GM18951 (cell line): ENCODE measurements at regions of chr4 and their contacts with region 1.

Region 1: GRCh38 chr4:76515975-76516843 is 81.2 kb downstream of the SHROOM3 start:
- POLR2A ChIP-seq: no peak

Region 2: DNA sequence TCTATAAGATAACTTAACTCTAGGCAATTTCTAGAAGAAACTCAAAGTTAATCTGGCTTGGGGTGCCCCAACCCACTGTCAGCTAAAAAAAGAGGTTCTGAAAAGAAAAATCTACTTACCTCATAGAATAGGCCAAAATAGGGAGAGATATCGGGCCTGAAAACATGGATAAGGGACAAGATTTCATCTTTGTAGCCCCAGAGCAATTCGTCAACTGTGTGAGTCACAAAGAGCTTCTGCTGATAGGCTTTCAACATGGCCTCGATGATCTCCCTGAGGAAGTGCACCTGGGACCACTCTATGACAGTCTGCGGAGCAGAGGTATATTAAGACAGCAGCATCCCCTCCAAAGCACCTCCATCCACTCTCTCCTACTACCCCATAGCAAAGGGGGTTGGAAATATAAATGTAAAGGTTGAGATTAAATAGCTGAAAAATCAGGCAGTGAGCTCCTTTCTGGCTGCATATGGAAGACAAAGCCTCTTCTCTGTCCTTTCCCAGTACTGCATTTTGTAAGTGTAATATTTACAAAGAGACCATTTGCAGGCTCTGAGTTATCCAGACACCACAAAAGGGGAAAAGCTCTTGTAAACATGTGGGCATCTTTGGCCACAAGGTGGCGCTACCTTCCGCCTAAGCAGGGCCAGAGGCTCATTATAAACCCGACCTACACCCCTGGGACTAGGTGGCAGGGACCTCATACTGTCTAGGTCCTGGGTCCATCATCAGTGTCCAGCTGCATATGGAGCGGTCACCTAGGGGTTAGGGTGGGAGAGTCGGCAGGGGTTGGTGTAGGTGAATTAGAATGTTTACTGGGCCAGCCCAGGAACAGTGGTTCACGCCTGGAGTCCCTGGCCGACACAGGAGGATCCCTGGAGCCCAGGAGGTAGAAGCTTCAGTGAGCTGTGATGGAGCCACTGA is 336.6 kb before region 1 on chr4:
- in situ Hi-C with region 1: no loop called
- POLR2A ChIP-seq: no peak

Region 3: GRCh38 chr4:76326515-76326914 is 189.7 kb before region 1 on chr4:
- in situ Hi-C with region 1: no loop called
- POLR2A ChIP-seq: no peak

Region 4: DNA sequence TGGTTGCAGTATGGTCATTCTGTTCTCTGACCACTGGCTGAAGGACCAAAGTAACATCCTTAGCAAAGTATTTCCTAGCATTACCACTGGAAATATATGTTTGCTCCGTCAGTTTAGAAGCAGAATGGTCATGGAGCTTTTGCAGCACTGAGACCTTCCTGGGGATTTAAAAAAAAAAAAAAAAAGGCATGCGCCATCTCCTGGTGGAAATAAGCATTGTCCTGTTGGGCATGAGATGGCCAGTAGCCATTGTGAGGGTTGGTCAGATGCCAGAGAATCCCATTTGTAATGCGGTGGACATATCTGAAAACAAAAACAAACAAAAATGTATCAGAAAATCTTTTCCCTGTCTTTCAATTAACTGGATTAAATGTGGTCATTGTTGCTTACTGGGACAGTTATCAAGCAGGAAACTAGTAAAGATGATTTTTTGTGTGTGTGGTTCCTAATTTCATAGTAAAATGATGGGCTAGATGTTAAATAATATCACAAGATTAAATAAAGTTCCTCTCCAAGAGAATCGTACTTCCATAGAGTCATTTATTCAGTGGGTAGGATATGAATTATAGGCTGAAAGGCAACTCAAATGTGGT is 242.2 kb after region 1 on chr4:
- in situ Hi-C with region 1: loop called (anchors 10 kb)
- POLR2A ChIP-seq: no peak